Endothelial cell of umbilical vein (primary cell): ENCODE measurements at regions of chr12 and their contacts with region 1.

Region 1: DNA sequence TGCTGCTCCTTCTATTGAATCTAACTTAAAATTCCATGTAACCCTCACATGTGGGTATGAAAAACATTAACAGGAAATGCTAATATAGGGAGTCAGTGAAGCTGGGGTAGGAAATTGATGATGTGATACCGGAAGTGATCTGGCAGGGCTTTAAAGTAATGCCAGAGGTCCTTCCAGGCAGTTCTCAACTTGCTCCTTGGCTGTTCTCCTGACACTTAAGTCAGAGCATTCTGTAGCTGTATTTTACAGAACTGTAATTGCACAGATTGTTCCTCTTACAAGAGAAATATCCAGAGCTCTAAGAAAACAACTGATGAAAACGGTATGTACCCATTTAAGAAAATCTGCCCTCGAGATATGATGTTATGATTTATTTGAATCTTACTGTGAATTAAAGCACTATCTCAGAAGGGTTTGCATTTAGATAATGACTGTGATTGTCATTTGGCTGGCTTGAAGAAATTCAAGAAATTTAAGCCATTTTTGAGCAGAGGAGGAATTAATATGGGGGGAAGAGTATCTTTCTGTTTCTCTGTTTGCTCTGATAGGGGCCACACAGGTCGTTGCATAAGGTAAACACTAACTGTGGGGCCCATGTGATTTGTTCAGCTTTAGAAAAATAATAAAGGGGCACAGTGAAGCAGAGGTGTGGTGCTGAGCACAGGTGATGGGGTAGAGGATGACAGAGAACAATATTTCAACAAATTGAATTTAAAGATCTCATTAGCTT is 88.4 kb downstream of the BBS10 start:
- DNase-seq: peak; percentile 93
- H3K4me3 ChIP-seq: peak overlapping the region; percentile 19 to 96 (median 95)
- H3K27ac ChIP-seq: peak overlapping the region; percentile 96
- H3K4me1 ChIP-seq: peaks cover 30% of the 10 kb centered on the region
- H3K27me3 ChIP-seq: no peaks in the 10 kb centered on the region
- CTCF ChIP-seq: no peak
- POLR2A ChIP-seq: peak; percentile 89

Region 2: DNA sequence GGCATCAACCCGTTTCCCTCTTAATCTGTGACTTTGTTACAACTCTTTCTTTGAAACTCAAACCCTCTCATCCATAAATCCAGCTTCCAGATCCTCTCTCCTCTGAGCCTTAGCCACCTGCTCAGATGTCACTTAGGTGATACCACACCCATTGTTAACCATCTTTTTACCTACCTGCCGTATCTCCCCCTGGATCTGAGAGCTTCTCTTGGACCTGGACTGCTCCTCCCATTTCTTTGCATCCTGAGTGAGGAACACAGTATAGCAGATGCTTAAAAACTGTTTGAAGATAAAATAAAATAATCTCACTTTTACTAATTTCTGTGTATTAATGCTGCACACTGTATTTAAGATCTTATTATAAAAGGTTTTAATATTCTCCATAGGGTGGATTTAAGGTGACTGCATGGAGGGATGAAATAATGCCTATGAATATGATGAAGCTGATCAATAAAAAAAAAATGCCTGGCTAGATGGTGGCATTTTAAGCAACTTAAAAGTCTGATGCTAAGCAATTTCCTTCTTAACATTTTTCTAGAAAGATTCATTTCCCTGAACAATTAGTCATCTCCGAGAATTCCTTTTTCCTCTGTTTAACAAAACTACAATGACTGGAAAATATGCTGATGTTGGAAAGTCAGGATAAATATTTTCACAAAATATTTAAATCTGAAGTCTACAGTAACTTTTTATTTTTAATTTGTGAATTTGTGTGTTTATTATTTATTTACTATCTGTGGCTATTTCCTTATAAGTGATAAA is 136.2 kb before region 1 on chr12:
- CTCF ChIA-PET with region 1: no interaction called
- POLR2A ChIA-PET with region 1: interaction called, 4 read pairs
- dilution Hi-C with region 1: no loop called
- intact Hi-C with region 1: loop called (anchors 2 kb)
- DNase-seq: peak; percentile 79
- H3K4me3 ChIP-seq: peak overlapping the region in 1 of 3 experiments; percentile 49
- H3K27ac ChIP-seq: peak overlapping the region; percentile 89
- H3K4me1 ChIP-seq: peaks cover 18% of the 10 kb centered on the region
- H3K27me3 ChIP-seq: no peaks in the 10 kb centered on the region
- CTCF ChIP-seq: no peak
- POLR2A ChIP-seq: no peak

Region 3: GRCh38 chr12:76183459-76184186 is 76.2 kb before region 1 on chr12:
- CTCF ChIA-PET with region 1: interaction called, 3 read pairs
- POLR2A ChIA-PET with region 1: no interaction called
- dilution Hi-C with region 1: no loop called
- intact Hi-C with region 1: loop called (anchors 1 kb)
- DNase-seq: peak; percentile 98
- H3K4me3 ChIP-seq: no peak overlapping the region
- H3K27ac ChIP-seq: peak overlapping the region; percentile 70
- H3K4me1 ChIP-seq: peaks cover 12% of the 10 kb centered on the region
- H3K27me3 ChIP-seq: no peaks in the 10 kb centered on the region
- CTCF ChIP-seq: no peak
- POLR2A ChIP-seq: no peak

Region 4: GRCh38 chr12:76216585-76217472 is 43.0 kb before region 1 on chr12:
- CTCF ChIA-PET with region 1: no interaction called
- POLR2A ChIA-PET with region 1: no interaction called
- dilution Hi-C with region 1: no loop called
- intact Hi-C with region 1: no loop called
- DNase-seq: no peak
- H3K4me3 ChIP-seq: no peak overlapping the region
- H3K27ac ChIP-seq: no peak overlapping the region
- H3K4me1 ChIP-seq: peaks cover 9% of the 10 kb centered on the region
- H3K27me3 ChIP-seq: no peaks in the 10 kb centered on the region
- CTCF ChIP-seq: no peak
- POLR2A ChIP-seq: no peak

Region 5: GRCh38 chr12:76236611-76237010 is 23.2 kb before region 1 on chr12:
- CTCF ChIA-PET with region 1: interaction called, 10 read pairs
- POLR2A ChIA-PET with region 1: interaction called, 4 read pairs
- dilution Hi-C with region 1: no loop called
- intact Hi-C with region 1: loop called (anchors 1 kb)
- DNase-seq: peak; percentile 82
- H3K4me3 ChIP-seq: no peak overlapping the region
- H3K27ac ChIP-seq: peak overlapping the region; percentile 72
- H3K4me1 ChIP-seq: peaks cover 17% of the 10 kb centered on the region
- H3K27me3 ChIP-seq: no peaks in the 10 kb centered on the region
- CTCF ChIP-seq: no peak
- POLR2A ChIP-seq: peak; percentile 55

Region 6: DNA sequence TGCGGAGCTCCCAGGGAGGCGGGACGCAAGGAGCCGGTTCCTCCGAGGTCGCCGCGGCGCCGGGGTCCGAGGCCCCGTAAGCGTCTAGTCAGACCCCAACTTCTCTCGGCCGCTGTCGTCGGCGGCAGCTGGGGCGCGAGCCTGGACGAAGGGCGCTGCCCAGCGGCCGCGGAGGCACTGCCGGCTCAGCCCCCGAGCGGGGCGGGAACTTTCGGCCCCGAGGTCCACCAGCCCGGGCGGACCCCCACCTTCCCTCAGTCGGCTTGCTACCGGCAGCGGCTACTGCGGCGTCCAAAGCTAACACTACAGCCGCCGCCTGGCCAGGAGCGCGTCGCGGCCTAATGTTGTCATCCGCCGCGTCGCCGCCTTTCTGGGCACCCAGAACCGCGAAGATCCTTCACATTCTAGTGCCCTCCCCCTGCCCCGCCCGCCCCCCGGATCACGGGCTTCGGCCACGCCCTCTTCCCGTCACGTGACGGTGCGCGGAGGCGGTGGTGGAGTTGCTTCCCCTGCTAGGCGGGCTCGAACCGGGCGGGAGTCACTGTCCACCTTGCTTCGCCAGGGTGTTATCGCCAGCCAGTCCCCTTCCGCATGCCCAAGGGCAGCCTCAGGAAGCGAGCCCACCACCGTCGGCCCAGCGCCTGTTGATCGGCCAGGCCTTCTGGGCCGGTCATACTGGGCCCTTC is 299.7 kb after region 1 on chr12 and contains the start of gene OSBPL8:
- CTCF ChIA-PET with region 1: no interaction called
- POLR2A ChIA-PET with region 1: no interaction called
- dilution Hi-C with region 1: no loop called
- intact Hi-C with region 1: loop called (anchors 5 kb)
- DNase-seq: peak; percentile 95
- H3K4me3 ChIP-seq: peak within 1 kb of the TSS; percentile 83 to 95 (median 88)
- H3K27ac ChIP-seq: peak within 1 kb of the TSS; percentile 84
- H3K4me1 ChIP-seq: peaks cover 27% of the 10 kb centered on the region
- H3K27me3 ChIP-seq: no peaks in the 10 kb centered on the region
- CTCF ChIP-seq: no peak
- POLR2A ChIP-seq: peak; percentile 91
- total RNA-seq, gene OSBPL8: 47.6 and 53.9 TPM in 2 replicates